AG04450 (cell line): ENCODE measurements at regions of chr7 and their contacts with region 1.

Region 1: GRCh38 chr7:26090927-26091519 is 61.0 kb upstream of the NFE2L3 start:
- DNase-seq: peak; percentile 26
- H3K4me3 ChIP-seq: no peak overlapping the region
- H3K27ac ChIP-seq: no peak overlapping the region
- H3K27me3 ChIP-seq: peaks cover 5% of the 10 kb centered on the region
- CTCF ChIP-seq: peak; percentile 87

Region 2: DNA sequence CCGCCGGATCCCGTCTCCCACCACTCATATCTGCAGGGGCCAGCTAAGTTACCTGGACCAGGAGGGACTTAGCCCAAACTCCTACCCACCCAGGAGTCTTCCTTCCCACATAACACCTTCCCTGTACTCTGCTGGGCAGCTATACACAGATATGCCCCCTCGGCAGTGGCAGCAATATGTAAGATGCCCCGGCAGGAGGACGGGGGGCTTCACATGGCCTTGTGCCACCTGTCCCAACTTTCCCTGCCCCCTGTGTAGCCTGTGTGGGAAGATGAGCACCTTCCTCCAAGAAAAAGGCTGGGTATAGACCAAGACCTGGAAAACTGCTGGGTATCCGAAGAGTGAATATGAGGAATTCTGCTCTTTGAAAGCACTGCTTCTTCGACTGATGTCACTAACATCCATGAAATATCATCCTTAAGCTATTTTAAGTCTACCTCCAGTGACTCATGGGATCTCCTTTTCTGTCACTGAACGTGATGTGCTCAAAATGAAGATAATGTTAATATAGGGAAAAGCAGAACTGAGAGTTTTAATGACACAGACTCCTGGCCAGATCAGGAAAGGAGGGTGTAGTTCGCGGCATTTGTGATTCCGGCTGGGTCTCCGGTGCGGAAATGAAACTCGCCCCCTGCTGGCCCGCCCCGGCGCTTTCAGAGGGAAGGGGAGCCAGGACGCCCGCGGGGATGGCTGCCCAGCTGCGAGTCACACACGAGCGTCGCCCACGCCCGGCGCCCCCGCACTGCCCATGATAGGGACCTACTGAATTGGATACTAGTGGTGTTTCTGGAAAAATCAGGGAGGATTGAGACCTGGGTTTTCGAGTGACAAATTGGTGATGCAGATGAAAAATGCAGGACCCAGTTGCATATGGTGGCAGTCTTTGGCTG is 195.9 kb before region 1 on chr7:
- CTCF ChIA-PET with region 1: interaction called, 53 read pairs
- POLR2A ChIA-PET with region 1: no interaction called
- DNase-seq: no peak
- H3K4me3 ChIP-seq: no peak overlapping the region
- H3K27ac ChIP-seq: no peak overlapping the region
- H3K27me3 ChIP-seq: peaks cover 17% of the 10 kb centered on the region
- CTCF ChIP-seq: peak; percentile 70

Region 3: DNA sequence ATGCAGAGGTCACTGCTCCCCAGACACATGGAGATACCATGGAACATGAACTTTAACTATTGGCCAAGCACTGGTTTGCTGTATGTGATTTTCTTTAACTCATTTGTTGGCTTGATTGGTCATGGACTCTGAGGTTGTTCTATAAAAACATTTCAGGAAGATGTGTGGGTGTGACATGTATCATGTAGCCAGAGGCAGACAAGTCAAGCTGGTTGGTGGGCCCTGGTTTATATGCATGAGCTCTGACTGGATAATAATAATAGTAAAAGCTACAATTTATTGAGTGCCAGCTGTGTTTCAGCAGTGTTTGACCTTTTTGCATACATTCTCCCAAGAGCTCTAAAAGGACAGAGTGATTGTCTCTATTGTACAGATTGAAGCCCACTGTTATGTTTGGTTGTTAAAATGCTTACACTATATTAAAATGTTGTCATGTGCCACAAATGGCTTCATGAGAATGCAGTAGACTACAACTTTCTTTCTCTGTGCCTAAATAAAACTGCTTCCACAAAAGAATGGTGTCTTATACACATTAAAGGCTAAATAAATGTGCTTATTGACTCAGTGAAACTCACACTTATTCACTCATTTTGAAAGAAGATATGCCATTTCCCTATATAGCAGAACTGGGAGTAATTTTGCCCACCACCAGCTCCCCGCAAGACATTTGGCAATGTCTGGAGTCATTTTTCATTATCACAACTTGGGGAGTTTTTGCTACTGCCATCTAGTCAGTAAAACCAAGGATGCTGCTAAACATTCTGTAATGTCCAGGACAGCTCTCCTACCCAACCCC is 182.7 kb before region 1 on chr7:
- CTCF ChIA-PET with region 1: no interaction called
- POLR2A ChIA-PET with region 1: no interaction called
- DNase-seq: no peak
- H3K4me3 ChIP-seq: no peak overlapping the region
- H3K27ac ChIP-seq: no peak overlapping the region
- H3K27me3 ChIP-seq: no peaks in the 10 kb centered on the region
- CTCF ChIP-seq: no peak

Region 4: DNA sequence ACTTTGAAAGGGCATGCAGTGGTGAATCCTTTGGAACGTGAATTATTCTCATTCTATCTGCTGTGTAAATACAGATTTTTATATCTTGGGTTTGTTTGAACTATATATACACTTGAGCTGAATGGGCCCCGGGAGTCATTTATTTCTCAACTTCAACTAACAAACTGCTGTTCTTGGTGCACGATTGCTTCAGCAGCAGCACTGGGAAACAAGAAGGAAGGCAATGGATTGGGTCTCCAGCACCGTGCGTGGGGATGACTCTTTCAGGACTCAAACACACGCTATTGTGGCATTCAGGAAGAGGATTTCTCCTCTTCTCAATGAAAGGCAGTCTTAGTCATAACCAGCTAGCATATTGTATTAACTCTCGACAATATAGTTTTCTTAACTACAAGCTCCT is 165.0 kb before region 1 on chr7:
- CTCF ChIA-PET with region 1: no interaction called
- POLR2A ChIA-PET with region 1: no interaction called
- DNase-seq: no peak
- H3K4me3 ChIP-seq: no peak overlapping the region
- H3K27ac ChIP-seq: no peak overlapping the region
- H3K27me3 ChIP-seq: no peaks in the 10 kb centered on the region
- CTCF ChIP-seq: no peak

Region 5: DNA sequence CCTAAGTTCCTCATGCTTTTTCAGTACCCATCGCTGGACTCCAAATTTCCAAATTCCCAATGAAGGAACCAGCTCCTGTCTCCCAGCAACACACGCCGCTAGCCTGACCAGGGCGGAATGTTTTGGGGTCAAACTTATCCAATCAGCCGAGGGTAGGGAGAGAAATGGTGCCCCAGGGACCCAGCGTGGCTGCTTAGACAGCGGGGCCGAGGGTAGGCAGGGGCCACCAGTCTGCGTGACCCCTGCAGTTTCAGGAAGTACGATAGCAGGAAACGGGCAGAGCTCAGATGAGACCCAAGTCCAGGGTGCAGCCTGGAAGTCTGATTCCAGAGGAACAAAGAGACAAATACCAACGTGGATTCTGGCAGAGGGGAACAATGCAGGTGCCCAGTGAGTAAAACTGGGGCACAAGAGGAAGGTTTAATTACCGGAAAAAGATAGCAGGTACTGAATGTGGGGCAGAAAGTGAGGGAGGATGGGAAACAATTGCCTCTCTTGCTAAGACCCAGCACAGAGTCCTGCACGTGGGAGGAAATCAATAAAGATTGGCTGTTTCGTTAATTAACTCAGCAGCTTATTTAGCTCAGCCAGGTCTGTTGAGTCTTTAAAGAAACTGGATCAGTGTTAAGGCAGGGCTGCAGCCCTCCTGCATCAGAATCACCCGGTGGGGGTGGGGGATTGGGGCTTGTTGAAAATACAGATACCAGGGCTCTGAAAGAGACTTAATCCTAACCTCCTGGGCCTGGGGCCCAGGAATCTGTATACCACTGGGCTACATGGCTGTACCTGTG is 10.5 kb after region 1 on chr7:
- CTCF ChIA-PET with region 1: interaction called, 13 read pairs
- POLR2A ChIA-PET with region 1: no interaction called
- DNase-seq: no peak
- H3K4me3 ChIP-seq: no peak overlapping the region
- H3K27ac ChIP-seq: no peak overlapping the region
- H3K27me3 ChIP-seq: peaks cover 3% of the 10 kb centered on the region
- CTCF ChIP-seq: no peak

Region 6: DNA sequence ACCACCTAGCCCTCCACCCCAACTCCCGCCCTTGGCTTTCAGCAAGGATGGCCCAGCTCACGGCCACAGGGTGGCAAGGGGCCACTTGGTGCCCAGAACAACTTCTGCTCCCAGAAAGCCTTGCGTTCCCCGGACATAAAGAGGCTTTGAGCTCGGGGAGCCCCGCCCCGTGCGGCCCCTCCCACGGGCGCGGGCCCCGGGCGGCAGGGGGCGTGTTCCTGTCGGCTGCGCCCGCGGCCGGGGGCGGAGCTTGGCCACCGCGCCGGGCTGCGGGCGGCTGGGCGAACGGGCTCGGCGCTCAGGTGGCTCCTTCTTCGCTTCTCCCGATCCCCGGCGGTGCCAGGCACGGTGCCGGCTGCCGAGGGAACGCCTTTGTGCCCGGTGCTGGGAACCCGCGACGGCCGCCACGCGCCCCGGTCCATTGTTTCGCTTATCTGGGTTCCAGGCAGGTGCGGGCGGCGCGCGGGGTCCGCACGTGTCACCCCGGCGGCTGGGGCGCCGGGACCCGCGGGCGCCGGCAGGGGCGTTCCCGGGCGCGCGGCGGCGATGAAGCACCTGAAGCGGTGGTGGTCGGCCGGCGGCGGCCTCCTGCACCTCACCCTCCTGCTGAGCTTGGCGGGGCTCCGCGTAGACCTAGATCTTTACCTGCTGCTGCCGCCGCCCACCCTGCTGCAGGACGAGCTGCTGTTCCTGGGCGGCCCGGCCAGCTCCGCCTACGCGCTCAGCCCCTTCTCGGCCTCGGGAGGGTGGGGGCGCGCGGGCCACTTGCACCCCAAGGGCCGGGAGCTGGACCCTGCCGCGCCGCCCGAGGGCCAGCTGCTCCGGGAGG is 61.1 kb after region 1 on chr7 and contains the start of gene NFE2L3:
- CTCF ChIA-PET with region 1: interaction called, 13 read pairs
- POLR2A ChIA-PET with region 1: no interaction called
- DNase-seq: no peak
- H3K4me3 ChIP-seq: peak within 1 kb of the TSS; percentile 69
- H3K27ac ChIP-seq: no peak within 1 kb of the TSS
- H3K27me3 ChIP-seq: no peaks in the 10 kb centered on the region
- CTCF ChIP-seq: no peak
- polyA plus RNA-seq, gene NFE2L3: 50.2 and 63.5 TPM in 2 replicates

Region 7: DNA sequence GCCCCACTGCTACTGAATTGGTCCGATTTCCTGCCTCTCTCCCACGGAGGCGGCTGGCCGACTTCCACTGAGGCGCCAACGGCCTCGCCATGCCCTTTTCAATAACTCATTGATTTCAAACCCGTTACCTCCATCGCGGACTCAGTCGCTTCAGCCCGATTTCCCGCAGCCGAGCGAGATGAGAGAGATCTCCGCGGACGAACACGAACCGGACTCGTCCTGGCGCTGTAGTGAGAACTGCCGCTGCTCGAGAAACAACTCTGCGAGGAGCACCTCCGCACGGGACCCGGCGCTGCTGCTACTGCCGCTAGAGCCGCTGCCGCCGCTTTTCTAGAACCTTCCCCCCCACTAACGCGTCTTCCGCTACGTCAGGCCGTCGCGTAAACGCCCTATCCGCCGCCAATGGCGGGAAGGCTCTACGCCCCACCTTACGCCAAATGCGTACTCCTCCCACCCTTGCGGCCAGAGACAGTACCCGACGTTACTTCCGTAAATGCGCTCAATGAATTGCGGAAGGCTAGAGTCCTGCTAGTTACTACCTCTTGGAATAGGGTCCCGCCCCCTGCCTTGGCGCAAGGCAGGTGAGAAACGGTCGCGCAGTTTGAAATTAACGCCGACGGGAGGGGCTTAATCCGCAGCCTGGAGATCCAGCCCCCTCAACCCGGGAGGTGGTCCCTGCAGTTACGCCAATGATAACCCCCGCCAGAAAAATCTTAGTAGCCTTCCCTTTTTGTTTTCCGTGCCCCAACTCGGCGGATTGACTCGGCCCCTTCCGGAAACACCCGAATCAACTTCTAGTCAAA is 109.6 kb after region 1 on chr7 and contains the start of gene HNRNPA2B1:
- CTCF ChIA-PET with region 1: interaction called, 165 read pairs
- POLR2A ChIA-PET with region 1: interaction called, 4 read pairs
- DNase-seq: peak; percentile 93
- H3K4me3 ChIP-seq: peak within 1 kb of the TSS; percentile 97
- H3K27ac ChIP-seq: peak within 1 kb of the TSS; percentile 96
- H3K27me3 ChIP-seq: no peaks in the 10 kb centered on the region
- CTCF ChIP-seq: no peak
- polyA plus RNA-seq, gene HNRNPA2B1: 354 and 493 TPM in 2 replicates

Region 8: DNA sequence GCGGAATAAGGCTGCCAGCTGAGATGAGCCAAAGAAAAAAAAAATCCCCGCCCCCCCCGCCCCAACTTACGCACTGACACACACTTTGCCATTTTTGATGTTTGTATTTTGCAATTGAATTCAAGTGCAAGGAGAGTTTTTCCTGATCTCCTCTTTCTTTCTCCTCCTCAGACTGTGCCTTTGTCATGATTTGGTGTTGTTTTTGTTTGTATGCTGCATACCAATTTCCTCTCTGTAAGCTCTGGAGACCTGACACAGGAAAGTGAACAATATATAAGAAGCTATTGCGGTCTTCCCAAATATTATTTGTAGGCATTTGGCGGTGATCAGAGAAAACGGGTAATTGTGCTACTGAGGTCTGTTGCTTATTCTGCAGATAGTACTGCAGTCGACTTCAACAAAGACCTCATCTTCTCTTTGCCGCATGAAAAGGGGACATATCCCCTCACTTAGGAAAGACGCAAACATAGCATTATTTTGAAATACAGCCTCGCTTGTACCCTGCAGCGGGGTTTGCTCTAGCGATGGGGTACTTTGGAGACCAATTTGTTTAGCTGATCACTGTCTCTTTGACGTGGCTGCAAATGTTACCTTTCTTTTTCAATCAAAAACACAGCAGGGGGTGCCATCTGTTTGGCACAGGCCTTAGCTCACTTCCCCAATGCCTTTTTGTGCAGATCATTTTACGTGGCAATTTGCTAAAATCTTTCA is 566.8 kb after region 1 on chr7:
- CTCF ChIA-PET with region 1: interaction called, 11 read pairs
- POLR2A ChIA-PET with region 1: no interaction called
- DNase-seq: no peak
- H3K4me3 ChIP-seq: no peak overlapping the region
- H3K27ac ChIP-seq: no peak overlapping the region
- H3K27me3 ChIP-seq: peaks cover 3% of the 10 kb centered on the region
- CTCF ChIP-seq: no peak

Region 9: GRCh38 chr7:27160546-27161213 is 1069.7 kb after region 1 on chr7:
- CTCF ChIA-PET with region 1: interaction called, 18 read pairs
- POLR2A ChIA-PET with region 1: no interaction called
- DNase-seq: peak; percentile 64
- H3K4me3 ChIP-seq: peak overlapping the region; percentile 62
- H3K27ac ChIP-seq: no peak overlapping the region
- H3K27me3 ChIP-seq: peaks cover 26% of the 10 kb centered on the region
- CTCF ChIP-seq: peak; percentile 96